Ascending aorta (tissue), 2 donors: ENCODE measurements at regions of chr10 and their contacts with region 1.

Region 1: DNA sequence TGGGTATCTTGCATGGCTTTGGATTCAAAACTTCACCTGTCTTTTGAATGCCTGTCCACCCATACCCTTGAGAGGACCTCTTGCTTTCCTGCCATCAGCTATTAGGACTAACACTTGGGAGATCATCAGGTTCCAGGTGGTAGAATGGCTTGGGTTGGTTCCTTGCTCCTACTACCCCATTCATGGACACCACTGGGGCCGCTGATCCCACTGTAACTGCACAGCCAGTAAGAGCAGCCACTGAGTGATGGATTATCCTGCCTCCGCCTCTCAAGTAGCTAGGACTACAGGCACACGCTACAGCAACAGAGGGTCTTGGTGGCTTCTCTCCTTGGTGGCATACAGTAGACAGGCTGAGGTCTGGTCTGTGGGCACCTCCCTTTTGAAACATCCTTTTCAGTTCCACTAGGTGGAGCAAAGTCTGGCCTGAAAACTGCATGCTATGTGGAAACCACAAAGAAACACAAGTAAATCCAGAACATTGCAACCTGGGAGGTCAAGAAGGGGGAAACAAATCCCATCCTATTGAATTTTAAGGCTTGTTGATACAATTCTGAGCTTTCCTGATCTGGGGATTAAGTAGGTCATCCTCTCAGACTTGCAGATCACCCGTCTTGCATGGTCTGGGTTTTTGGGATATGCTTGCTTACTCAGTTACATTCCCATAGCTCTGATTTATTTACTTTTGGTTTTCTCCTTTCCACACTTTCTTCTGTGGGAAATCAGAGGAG is 9.4 kb downstream of the WBP1L start:
- DNase-seq: no peak
- H3K4me3 ChIP-seq: peak overlapping the region in 1 of 2 donors; percentile 43
- H3K27ac ChIP-seq: peak overlapping the region; percentile 95 to 96
- H3K4me1 ChIP-seq: peaks cover 21 to 49% of the 10 kb centered on the region in 2 donors
- H3K27me3 ChIP-seq: no peaks in the 10 kb centered on the region
- CTCF ChIP-seq: peak; percentile 59 to 61 (median 59)

Region 2: DNA sequence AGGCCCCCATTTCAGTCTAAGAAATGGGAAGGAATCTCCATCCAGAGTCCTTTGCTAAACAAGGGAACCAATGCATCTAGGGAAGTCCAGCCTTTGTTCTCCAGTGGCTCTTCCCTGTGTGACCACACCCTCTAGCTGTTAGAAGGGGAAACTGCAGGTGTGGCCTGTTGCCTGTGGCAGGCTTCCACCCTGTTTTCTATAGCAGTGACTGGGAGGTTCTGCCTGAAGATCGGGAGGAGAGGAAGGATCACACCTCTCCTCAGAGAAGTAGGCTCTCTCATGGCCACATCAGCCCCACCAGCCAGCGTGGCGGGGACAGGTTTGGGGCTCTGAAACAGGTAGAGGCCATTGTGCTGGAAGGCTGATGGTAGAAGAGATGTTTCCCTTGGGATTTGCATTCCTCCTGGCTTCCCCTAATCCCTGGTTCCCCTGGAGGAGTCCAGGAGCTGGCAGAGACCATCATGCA is 156.6 kb before region 1 on chr10:
- intact Hi-C with region 1: no loop called
- DNase-seq: no peak
- H3K4me3 ChIP-seq: no peak overlapping the region
- H3K27ac ChIP-seq: peak overlapping the region; percentile 54 to 68
- H3K4me1 ChIP-seq: peaks cover 13 to 32% of the 10 kb centered on the region in 2 donors
- H3K27me3 ChIP-seq: no peaks in the 10 kb centered on the region
- CTCF ChIP-seq: peak; percentile 38 to 68 (median 67)

Region 3: DNA sequence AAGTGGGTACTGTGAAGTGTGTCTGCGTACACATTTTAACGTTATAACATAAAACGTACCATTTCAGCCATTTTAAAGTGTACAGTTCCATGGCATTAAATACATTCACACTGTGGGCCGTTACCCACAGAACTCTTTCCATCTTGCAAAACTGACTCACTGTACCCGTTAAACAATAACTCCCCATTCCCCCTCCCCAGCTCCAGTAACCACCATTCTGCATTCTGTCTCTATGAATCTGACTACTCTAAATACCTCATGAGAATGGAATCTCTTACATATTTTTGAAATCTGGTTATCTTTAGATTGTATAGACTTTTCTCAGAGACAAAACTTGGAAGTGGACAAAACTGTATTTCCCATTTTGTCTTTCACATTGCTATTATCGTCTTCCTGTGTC is 48.2 kb before region 1 on chr10:
- intact Hi-C with region 1: no loop called
- DNase-seq: no peak
- H3K4me3 ChIP-seq: no peak overlapping the region
- H3K27ac ChIP-seq: no peak overlapping the region
- H3K4me1 ChIP-seq: no peaks in the 10 kb centered on the region
- H3K27me3 ChIP-seq: no peaks in the 10 kb centered on the region
- CTCF ChIP-seq: no peak

Region 4: GRCh38 chr10:102776779-102777456 is 23.8 kb after region 1 on chr10:
- intact Hi-C with region 1: loop called (anchors 2 kb)
- DNase-seq: peak; percentile 76 to 97
- H3K4me3 ChIP-seq: peak overlapping the region; percentile 42 to 63
- H3K27ac ChIP-seq: peak overlapping the region; percentile 92 to 95
- H3K4me1 ChIP-seq: peaks cover 36 to 80% of the 10 kb centered on the region in 2 donors
- H3K27me3 ChIP-seq: no peaks in the 10 kb centered on the region
- CTCF ChIP-seq: no peak

Region 5: DNA sequence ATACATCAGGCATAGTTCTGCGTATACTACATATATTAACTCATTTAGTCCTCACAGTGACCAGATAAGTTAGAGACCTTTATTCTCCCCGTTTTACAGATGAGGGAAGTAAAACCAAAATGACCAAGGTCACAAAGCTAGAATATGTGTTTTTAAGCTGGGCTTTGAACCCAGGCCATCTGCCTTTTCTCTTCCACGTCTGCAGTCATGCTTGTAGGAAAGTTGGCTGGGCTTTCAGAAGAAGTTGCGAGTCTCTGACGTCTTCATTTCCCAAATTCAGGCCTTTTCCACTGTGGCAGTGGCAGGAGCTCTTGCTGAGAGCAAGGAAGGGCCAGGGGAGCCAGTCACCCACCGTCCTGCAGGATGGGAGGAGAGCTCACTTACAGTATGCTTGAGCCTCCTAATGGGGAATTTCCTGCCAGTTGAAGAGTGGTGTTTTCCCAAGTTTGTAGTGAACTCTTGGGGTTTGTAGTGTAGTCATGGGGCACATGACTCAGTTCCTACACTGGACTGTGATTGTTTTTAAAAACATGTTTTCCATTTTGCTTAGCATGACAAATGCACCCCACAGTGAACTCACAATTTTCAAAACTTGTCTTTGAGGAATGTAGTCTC is 49.9 kb after region 1 on chr10:
- intact Hi-C with region 1: loop called (anchors 5 kb)
- DNase-seq: peak in 1 of 2 donors; percentile 90
- H3K4me3 ChIP-seq: no peak overlapping the region
- H3K27ac ChIP-seq: peak overlapping the region; percentile 85 to 88
- H3K4me1 ChIP-seq: peaks cover 26 to 45% of the 10 kb centered on the region in 2 donors
- H3K27me3 ChIP-seq: no peaks in the 10 kb centered on the region
- CTCF ChIP-seq: no peak

Region 6: DNA sequence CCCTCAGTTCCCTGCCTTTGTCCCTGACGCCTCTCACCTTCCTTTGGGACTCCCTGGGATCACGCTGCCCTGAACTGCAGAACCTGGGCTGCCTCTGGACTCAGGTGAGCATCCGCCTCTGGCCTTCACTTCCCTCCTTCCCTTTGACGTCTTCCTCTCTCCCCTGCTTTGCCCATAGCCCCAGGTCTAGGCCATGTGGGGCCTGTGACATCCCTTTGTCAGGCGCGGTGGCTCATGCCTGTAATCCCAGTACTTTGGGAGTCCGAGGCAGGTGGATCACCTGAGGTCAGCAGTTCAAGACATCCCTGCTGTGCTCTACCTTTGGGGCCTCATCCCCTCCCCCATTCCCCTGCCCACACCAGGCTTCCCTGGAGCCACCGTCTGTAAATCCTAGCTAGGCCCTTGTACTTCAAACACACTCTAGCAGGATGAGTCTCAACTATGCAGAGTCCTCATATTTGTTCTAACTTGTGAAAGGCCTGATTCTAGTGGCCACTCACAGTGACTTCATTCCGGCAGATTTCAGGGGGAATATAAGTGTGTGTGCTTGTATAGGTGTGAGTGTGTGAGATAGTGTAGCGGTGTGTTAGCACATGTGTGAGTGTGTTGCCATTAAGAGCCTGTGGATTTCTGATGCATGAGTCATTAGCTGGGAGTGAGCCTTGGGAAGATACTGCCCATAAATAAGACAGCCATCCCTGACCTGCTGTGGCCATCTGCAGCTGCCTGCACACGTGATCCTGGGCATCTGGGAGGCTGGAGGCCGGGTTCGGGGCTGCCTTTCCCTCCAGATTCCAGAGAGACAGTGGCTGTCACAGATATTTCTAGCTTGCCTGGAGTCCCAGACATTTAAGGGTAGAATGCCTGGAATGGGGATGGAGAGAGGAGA is 738.6 kb after region 1 on chr10:
- intact Hi-C with region 1: no loop called
- DNase-seq: no peak
- H3K4me3 ChIP-seq: no peak overlapping the region
- H3K27ac ChIP-seq: no peak overlapping the region
- H3K4me1 ChIP-seq: no peaks in the 10 kb centered on the region
- H3K27me3 ChIP-seq: peaks cover 16% of the 10 kb centered on the region
- CTCF ChIP-seq: no peak